ENCODE measurements at regions of chr2 and their contacts with region 1.

Region 1: GRCh38 chr2:130181325-130181879 is at the start of gene SMPD4:
- DNase-seq: peak; percentile 97
- ATAC-seq: peak; percentile 79
- H3K4me3 Mint-ChIP-seq: peak within 1 kb of the TSS; percentile 93
- H3K27ac Mint-ChIP-seq: peak within 1 kb of the TSS; percentile 95
- H3K4me1 Mint-ChIP-seq: peaks cover 16% of the 10 kb centered on the region
- H3K27me3 Mint-ChIP-seq: no peaks in the 10 kb centered on the region
- CTCF ChIP-seq: no peak
- total RNA-seq, gene SMPD4: 73.8 to 75.8 TPM

Region 2: DNA sequence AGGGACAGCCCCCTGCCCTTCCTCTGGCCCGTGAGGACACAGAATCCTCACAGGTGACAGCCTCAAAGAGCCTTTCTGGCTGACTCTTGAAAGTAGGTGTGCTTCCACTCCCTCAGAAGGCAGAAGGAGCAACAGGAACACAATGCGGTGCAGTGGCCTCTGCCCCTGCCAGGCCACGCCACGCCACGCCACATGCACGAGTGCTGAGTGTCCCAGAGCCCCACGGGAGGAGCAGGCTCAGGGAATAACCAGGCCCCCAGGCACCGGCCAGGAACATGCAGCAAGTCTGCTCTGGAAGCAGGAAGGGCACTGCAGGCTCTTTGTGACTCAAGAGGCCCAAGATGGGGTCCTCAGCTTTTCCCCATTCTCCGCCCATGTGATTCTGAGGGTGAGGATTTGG is 18.4 kb before region 1 on chr2:
- CTCF ChIA-PET with region 1: no interaction called
- POLR2A ChIA-PET with region 1: no interaction called
- intact Hi-C with region 1: no loop called
- DNase-seq: no peak
- ATAC-seq: no peak
- H3K4me3 Mint-ChIP-seq: no peak overlapping the region
- H3K27ac Mint-ChIP-seq: no peak overlapping the region
- H3K4me1 Mint-ChIP-seq: peaks cover 7% of the 10 kb centered on the region
- H3K27me3 Mint-ChIP-seq: no peaks in the 10 kb centered on the region
- CTCF ChIP-seq: no peak

Region 3: GRCh38 chr2:130332271-130333073 is 151.1 kb after region 1 on chr2:
- CTCF ChIA-PET with region 1: interaction called, 10 read pairs
- POLR2A ChIA-PET with region 1: interaction called, 3 read pairs
- intact Hi-C with region 1: loop called (anchors 5 kb)
- DNase-seq: peak; percentile 83
- ATAC-seq: peak; percentile 88
- H3K4me3 Mint-ChIP-seq: peak overlapping the region; percentile 41
- H3K27ac Mint-ChIP-seq: no peak overlapping the region
- H3K4me1 Mint-ChIP-seq: peaks cover 8% of the 10 kb centered on the region
- H3K27me3 Mint-ChIP-seq: peaks cover 23% of the 10 kb centered on the region
- CTCF ChIP-seq: peak; percentile 91